Adrenal gland (tissue), 19 donors: ENCODE measurements at regions of chr5 and their contacts with region 1.

Region 1: DNA sequence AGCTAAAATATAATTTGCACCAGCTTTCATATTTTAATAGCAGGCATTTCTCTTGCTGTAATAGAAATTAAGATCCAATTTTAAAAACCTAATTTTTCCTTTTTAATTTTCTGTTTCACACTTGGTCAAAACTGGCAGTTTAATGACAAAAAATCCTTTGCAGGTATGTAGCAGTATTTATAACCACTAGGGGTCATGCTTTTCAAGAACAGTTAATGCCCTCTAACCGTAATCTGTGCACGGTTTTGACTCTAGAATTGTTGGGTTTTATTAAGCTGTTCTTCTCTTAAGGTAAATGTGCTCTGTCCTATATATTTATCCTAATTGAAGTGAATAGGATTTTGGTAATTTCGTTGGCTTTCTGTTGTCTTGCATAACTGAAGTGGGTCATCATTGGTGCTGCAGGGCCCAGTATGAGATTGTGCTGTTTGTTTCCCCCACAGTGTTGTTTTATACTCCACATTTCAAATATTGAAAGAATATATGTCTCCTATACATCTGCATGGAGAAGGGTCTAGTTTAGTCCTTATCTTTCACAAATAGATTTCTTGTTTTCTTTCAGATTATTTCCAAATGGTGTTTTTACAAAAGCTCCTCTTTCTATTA is 107.4 kb downstream of the SCAMP1 start:
- DNase-seq: no peak
- H3K4me3 ChIP-seq: no peak overlapping the region
- H3K27ac ChIP-seq: no peak overlapping the region
- H3K4me1 ChIP-seq: no peaks in the 10 kb centered on the region
- H3K27me3 ChIP-seq: no peaks in the 10 kb centered on the region
- CTCF ChIP-seq: peak; percentile 72 to 87 (median 82)
- POLR2A ChIP-seq: no peak

Region 2: GRCh38 chr5:78416677-78417425 is 51.0 kb before region 1 on chr5:
- intact Hi-C with region 1: no loop called
- DNase-seq: no peak
- H3K4me3 ChIP-seq: no peak overlapping the region
- H3K27ac ChIP-seq: no peak overlapping the region
- H3K4me1 ChIP-seq: no peaks in the 10 kb centered on the region
- H3K27me3 ChIP-seq: no peaks in the 10 kb centered on the region
- CTCF ChIP-seq: no peak
- POLR2A ChIP-seq: no peak

Region 3: GRCh38 chr5:78509884-78510769 is 42.3 kb after region 1 on chr5:
- intact Hi-C with region 1: no loop called
- DNase-seq: peak; percentile 75 to 83 (median 82)
- H3K4me3 ChIP-seq: peak overlapping the region in 2 of 4 donors; percentile 14 to 39
- H3K27ac ChIP-seq: peak overlapping the region; percentile 8 to 81 (median 47)
- H3K4me1 ChIP-seq: peaks cover 41 to 59% of the 10 kb centered on the region in 2 donors
- H3K27me3 ChIP-seq: no peaks in the 10 kb centered on the region
- CTCF ChIP-seq: peak in 3 of 6 experiments; percentile 4 to 21 (median 14)
- POLR2A ChIP-seq: peak in 1 of 2 donors; percentile 50

Region 4: GRCh38 chr5:78537821-78538220 is 70.0 kb after region 1 on chr5:
- intact Hi-C with region 1: loop called in 1 of 2 experiments (anchors 10 kb)
- DNase-seq: peak in 1 of 7 donors; percentile 29
- H3K4me3 ChIP-seq: no peak overlapping the region
- H3K27ac ChIP-seq: no peak overlapping the region
- H3K4me1 ChIP-seq: peaks cover 13 to 37% of the 10 kb centered on the region in 2 donors
- H3K27me3 ChIP-seq: no peaks in the 10 kb centered on the region
- CTCF ChIP-seq: peak; percentile 18 to 59 (median 47)
- POLR2A ChIP-seq: no peak

Region 5: DNA sequence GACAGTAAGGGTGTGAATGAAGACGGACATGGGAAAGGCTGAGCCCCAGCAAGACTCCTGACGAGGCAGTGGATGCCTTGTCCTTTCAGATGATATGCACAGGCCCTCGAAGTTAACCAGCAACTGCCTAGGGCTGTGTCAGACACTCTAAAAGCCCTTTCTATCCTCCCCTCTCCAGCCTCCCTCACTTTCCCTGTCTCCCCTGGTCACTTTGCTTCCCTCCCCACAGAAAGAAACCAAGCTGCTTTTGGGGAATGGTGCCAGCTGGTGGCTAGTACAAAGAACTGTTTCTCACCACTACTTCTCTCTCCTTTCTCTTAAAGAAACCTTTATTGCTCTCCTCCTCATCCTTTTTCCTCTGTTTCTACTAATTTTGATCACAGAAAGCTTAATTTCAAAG is 159.3 kb after region 1 on chr5:
- intact Hi-C with region 1: no loop called
- DNase-seq: peak in 4 of 7 donors; percentile 33 to 40 (median 37)
- H3K4me3 ChIP-seq: no peak overlapping the region
- H3K27ac ChIP-seq: no peak overlapping the region
- H3K4me1 ChIP-seq: peaks cover 13 to 25% of the 10 kb centered on the region in 2 donors
- H3K27me3 ChIP-seq: no peaks in the 10 kb centered on the region
- CTCF ChIP-seq: peak in 5 of 6 experiments; percentile 8 to 50 (median 47)
- POLR2A ChIP-seq: no peak

Region 6: GRCh38 chr5:78964887-78965286 is 497.0 kb after region 1 on chr5:
- intact Hi-C with region 1: loop called in 1 of 2 experiments (anchors 10 kb)
- DNase-seq: peak in 2 of 7 donors; percentile 25 to 35
- H3K4me3 ChIP-seq: no peak overlapping the region
- H3K27ac ChIP-seq: no peak overlapping the region
- H3K4me1 ChIP-seq: no peaks in the 10 kb centered on the region
- H3K27me3 ChIP-seq: no peaks in the 10 kb centered on the region
- CTCF ChIP-seq: peak; percentile 22 to 73 (median 61)
- POLR2A ChIP-seq: no peak